ENCODE measurements at regions of chr9 and their contacts with region 1.

Region 1: GRCh38 chr9:38141746-38142591 is 72.9 kb upstream of the SHB start:
- DNase-seq: no peak
- H3K4me3 ChIP-seq: no peak overlapping the region
- H3K27ac ChIP-seq: no peak overlapping the region
- H3K4me1 ChIP-seq: no peaks in the 10 kb centered on the region
- CTCF ChIP-seq: no peak

Region 2: DNA sequence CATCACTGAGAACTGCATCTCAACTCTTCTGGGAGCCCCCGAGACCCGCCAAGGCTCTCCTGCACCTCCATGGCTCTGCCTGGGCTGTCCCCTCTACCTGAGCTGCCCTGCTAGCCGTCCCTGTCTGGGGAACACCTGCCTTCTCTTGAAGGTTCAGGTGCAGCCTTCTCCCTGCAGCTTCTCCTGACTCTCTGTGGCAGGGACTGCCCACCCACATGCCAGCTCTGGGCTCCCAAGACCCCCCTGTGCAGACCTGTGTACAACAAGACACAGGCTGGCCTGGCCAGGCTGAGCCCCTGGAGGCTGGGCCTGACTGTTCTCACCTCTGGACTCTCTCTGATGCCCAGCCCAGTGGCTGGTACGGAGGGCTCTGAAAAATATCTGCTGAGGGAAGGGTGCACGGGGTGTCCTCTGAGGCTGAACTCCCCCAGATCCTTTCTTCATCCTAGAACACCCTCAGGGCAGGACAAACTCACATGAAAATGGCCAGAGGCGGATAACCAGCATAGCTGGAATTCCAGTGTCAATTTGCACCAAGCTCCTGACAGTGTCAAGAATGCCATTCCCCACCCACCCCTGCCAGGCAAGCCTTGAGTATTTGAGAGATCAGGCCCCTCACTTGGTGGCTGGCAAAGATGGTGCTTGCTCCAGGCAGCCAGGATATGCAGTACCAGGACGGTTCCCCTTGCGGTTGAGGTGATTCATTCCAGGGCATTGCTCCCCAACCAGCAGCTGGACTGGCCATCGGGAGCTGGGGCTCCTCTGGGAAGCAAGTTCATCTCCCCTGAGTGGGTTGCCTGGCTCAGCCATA is 197.1 kb before region 1 on chr9:
- CTCF ChIA-PET with region 1: no interaction called
- POLR2A ChIA-PET with region 1: no interaction called
- intact Hi-C with region 1: no loop called
- DNase-seq: no peak
- H3K4me3 ChIP-seq: no peak overlapping the region
- H3K27ac ChIP-seq: no peak overlapping the region
- H3K4me1 ChIP-seq: no peaks in the 10 kb centered on the region
- CTCF ChIP-seq: no peak

Region 3: DNA sequence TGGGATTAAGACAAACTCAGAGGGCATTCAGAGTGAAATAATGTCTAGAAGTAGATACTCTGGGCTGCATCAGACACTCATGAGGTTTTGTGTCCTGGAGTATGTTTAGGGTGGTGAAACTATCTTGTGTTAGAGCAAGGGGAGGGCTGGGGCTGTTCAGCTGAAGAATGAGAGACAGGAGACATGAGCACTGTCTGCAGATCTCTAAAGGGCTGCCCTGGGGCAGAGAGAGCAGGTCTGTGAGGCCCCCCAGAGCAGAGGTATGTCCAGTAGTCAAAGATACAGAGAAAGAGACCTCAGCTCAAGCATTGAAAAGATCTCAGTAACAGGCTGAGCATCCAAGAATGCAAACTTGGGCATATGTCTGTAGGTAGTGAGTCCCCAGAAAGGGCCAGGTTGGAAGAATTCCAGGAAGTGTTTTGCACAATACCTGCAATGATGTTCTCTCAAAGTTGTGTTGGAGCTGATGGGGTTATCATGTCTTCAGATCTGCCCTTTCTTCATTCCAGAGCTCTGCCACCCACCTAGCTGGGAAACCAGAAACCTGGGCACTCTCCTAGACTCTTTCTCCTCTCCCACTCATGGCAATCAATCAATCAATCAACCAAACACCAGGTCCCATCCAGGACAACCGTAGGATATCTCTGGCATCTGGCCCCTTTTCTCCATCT is 26.9 kb before region 1 on chr9:
- CTCF ChIA-PET with region 1: no interaction called
- POLR2A ChIA-PET with region 1: no interaction called
- intact Hi-C with region 1: loop called (anchors 2 kb)
- DNase-seq: no peak
- H3K4me3 ChIP-seq: no peak overlapping the region
- H3K27ac ChIP-seq: no peak overlapping the region
- H3K4me1 ChIP-seq: no peaks in the 10 kb centered on the region
- CTCF ChIP-seq: no peak

Measured in OCI-LY7 (cell line).